CD8-positive, alpha-beta T cell (primary cell): ENCODE measurements at regions of chr2 and their contacts with region 1.

Region 1: GRCh38 chr2:8681786-8682692 is at the start of gene ID2:
- DNase-seq: peak; percentile 96 to 100 (median 99)
- ATAC-seq: peak; percentile 74
- H3K4me3 ChIP-seq: peak within 1 kb of the TSS; percentile 89 to 94
- H3K4me3 Mint-ChIP-seq: peak within 1 kb of the TSS; percentile 99
- H3K27ac ChIP-seq: peak within 1 kb of the TSS; percentile 80 to 82
- H3K27ac Mint-ChIP-seq: peak within 1 kb of the TSS; percentile 97
- H3K4me1 ChIP-seq: peaks cover 40% of the 10 kb centered on the region
- H3K4me1 Mint-ChIP-seq: peaks cover 45% of the 10 kb centered on the region
- H3K27me3 ChIP-seq: peaks cover 3 to 9% of the 10 kb centered on the region in 2 experiments
- H3K27me3 Mint-ChIP-seq: peaks cover 15% of the 10 kb centered on the region
- CTCF ChIP-seq: no peak
- total RNA-seq, gene ID2: 290 to 298 TPM

Region 2: DNA sequence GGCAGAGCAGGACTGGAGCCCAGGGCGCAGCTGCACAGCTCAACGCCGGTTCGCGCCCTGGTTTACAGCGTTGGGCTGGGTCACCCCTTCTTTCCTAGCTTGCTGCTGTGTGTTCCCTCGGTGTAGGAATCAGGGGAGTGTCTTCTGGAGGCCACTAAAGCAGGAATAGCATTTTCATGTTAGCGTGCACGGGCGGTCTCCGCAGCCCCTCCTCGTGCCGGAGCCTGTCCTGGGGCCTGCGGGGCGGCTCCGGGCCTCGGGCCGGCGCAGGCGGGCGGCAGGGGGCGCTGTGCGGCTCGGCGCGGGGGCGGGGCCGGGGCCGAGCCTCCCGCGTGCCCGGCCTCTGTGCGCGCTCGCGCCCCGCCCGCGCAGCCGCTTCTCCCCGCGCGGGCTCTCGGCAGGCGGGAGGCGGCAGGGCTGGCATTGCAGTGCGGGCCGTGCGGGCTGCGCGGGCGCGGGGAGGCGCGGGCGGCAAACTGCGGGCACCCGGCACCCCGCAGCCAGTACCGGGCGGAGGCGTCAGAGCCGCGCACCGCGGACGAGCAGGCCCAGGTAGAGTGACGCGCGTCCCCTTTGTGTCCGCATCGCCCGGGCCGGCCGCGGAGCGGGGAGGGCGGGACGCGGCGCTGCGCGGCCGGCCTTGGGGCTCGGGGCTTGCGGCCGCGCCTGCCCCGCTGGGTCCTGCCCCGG is 1764.8 kb before region 1 on chr2 and contains the start of gene RNF144A:
- CTCF ChIA-PET with region 1: no interaction called
- POLR2A ChIA-PET with region 1: no interaction called
- intact Hi-C with region 1: loop called in 1 of 2 experiments (anchors 2 kb)
- DNase-seq: peak; percentile 52 to 89 (median 74)
- ATAC-seq: peak; percentile 77
- H3K4me3 ChIP-seq: peak within 1 kb of the TSS; percentile 57 to 65
- H3K4me3 Mint-ChIP-seq: peak within 1 kb of the TSS; percentile 80
- H3K27ac ChIP-seq: peak within 1 kb of the TSS in 1 of 2 experiments; percentile 28
- H3K27ac Mint-ChIP-seq: no peak within 1 kb of the TSS
- H3K4me1 ChIP-seq: peaks cover 79% of the 10 kb centered on the region
- H3K4me1 Mint-ChIP-seq: peaks cover 75% of the 10 kb centered on the region
- H3K27me3 ChIP-seq: no peaks in the 10 kb centered on the region
- H3K27me3 Mint-ChIP-seq: no peaks in the 10 kb centered on the region
- CTCF ChIP-seq: peak; percentile 63
- total RNA-seq, gene RNF144A: 25.8 to 28.8 TPM

Region 3: GRCh38 chr2:7427293-7428060 is 1254.6 kb before region 1 on chr2:
- CTCF ChIA-PET with region 1: interaction called, 23 read pairs
- POLR2A ChIA-PET with region 1: interaction called, 24 read pairs
- intact Hi-C with region 1: loop called (anchors 1 kb)
- DNase-seq: peak in 4 of 9 experiments; percentile 11 to 83 (median 57)
- ATAC-seq: peak; percentile 46
- H3K4me3 ChIP-seq: no peak overlapping the region
- H3K4me3 Mint-ChIP-seq: no peak overlapping the region
- H3K27ac ChIP-seq: peak overlapping the region in 1 of 2 experiments; percentile 37
- H3K27ac Mint-ChIP-seq: peak overlapping the region; percentile 64
- H3K4me1 ChIP-seq: peaks cover 39% of the 10 kb centered on the region
- H3K4me1 Mint-ChIP-seq: peaks cover 49% of the 10 kb centered on the region
- H3K27me3 ChIP-seq: no peaks in the 10 kb centered on the region
- H3K27me3 Mint-ChIP-seq: no peaks in the 10 kb centered on the region
- CTCF ChIP-seq: peak; percentile 94

Region 4: GRCh38 chr2:7725171-7725849 is 956.7 kb before region 1 on chr2:
- CTCF ChIA-PET with region 1: interaction called, 4 read pairs
- POLR2A ChIA-PET with region 1: interaction called, 31 read pairs
- intact Hi-C with region 1: loop called (anchors 1 to 5 kb)
- DNase-seq: peak in 7 of 9 experiments; percentile 18 to 91 (median 32)
- ATAC-seq: peak; percentile 79
- H3K4me3 ChIP-seq: peak overlapping the region; percentile 48 to 58
- H3K4me3 Mint-ChIP-seq: peak overlapping the region; percentile 90
- H3K27ac ChIP-seq: peak overlapping the region; percentile 6 to 77
- H3K27ac Mint-ChIP-seq: peak overlapping the region; percentile 94
- H3K4me1 ChIP-seq: peaks cover 29% of the 10 kb centered on the region
- H3K4me1 Mint-ChIP-seq: peaks cover 70% of the 10 kb centered on the region
- H3K27me3 ChIP-seq: no peaks in the 10 kb centered on the region
- H3K27me3 Mint-ChIP-seq: no peaks in the 10 kb centered on the region
- CTCF ChIP-seq: no peak

Region 5: GRCh38 chr2:8488001-8488738 is 193.9 kb before region 1 on chr2:
- CTCF ChIA-PET with region 1: no interaction called
- POLR2A ChIA-PET with region 1: interaction called, 4 read pairs
- intact Hi-C with region 1: loop called in 1 of 2 experiments (anchors 1 kb)
- DNase-seq: peak in 8 of 9 experiments; percentile 41 to 95 (median 64)
- ATAC-seq: peak; percentile 89
- H3K4me3 ChIP-seq: peak overlapping the region; percentile 18 to 48
- H3K4me3 Mint-ChIP-seq: peak overlapping the region; percentile 76
- H3K27ac ChIP-seq: peak overlapping the region; percentile 26 to 89
- H3K27ac Mint-ChIP-seq: peak overlapping the region; percentile 88
- H3K4me1 ChIP-seq: peaks cover 23% of the 10 kb centered on the region
- H3K4me1 Mint-ChIP-seq: peaks cover 37% of the 10 kb centered on the region
- H3K27me3 ChIP-seq: no peaks in the 10 kb centered on the region
- H3K27me3 Mint-ChIP-seq: no peaks in the 10 kb centered on the region
- CTCF ChIP-seq: no peak

Region 6: GRCh38 chr2:8644605-8645175 is 37.3 kb before region 1 on chr2:
- CTCF ChIA-PET with region 1: no interaction called
- POLR2A ChIA-PET with region 1: interaction called, 4 read pairs
- intact Hi-C with region 1: loop called in 1 of 2 experiments (anchors 2 kb)
- DNase-seq: peak in 1 of 9 experiments; percentile 35
- ATAC-seq: no peak
- H3K4me3 ChIP-seq: no peak overlapping the region
- H3K4me3 Mint-ChIP-seq: no peak overlapping the region
- H3K27ac ChIP-seq: no peak overlapping the region
- H3K27ac Mint-ChIP-seq: no peak overlapping the region
- H3K4me1 ChIP-seq: peaks cover 3% of the 10 kb centered on the region
- H3K4me1 Mint-ChIP-seq: peaks cover 2% of the 10 kb centered on the region
- H3K27me3 ChIP-seq: no peaks in the 10 kb centered on the region
- H3K27me3 Mint-ChIP-seq: no peaks in the 10 kb centered on the region
- CTCF ChIP-seq: no peak

Region 7: GRCh38 chr2:9720352-9721093 is 1038.5 kb after region 1 on chr2:
- CTCF ChIA-PET with region 1: no interaction called
- POLR2A ChIA-PET with region 1: no interaction called
- intact Hi-C with region 1: no loop called
- DNase-seq: no peak
- ATAC-seq: no peak
- H3K4me3 ChIP-seq: no peak overlapping the region
- H3K4me3 Mint-ChIP-seq: no peak overlapping the region
- H3K27ac ChIP-seq: no peak overlapping the region
- H3K27ac Mint-ChIP-seq: no peak overlapping the region
- H3K4me1 ChIP-seq: no peaks in the 10 kb centered on the region
- H3K4me1 Mint-ChIP-seq: no peaks in the 10 kb centered on the region
- H3K27me3 ChIP-seq: no peaks in the 10 kb centered on the region
- H3K27me3 Mint-ChIP-seq: no peaks in the 10 kb centered on the region
- CTCF ChIP-seq: no peak